Body of pancreas (tissue), 4 donors: ENCODE measurements at regions of chr18 and their contacts with region 1.

Region 1: GRCh38 chr18:63320046-63320689 is 599 bp upstream of the BCL2 start:
- DNase-seq: peak; percentile 75 to 91 (median 79)
- ATAC-seq: peak; percentile 82
- H3K4me3 ChIP-seq: no peak overlapping the region
- H3K27ac ChIP-seq: peak overlapping the region; percentile 64 to 89 (median 84)
- H3K4me1 ChIP-seq: peaks cover 34% of the 10 kb centered on the region
- H3K27me3 ChIP-seq: no peaks in the 10 kb centered on the region
- CTCF ChIP-seq: peak in 3 of 7 experiments; percentile 18 to 64 (median 43)
- POLR2A ChIP-seq: peak in 2 of 3 donors; percentile 42 to 50

Region 2: GRCh38 chr18:63022429-63023022 is 297.6 kb before region 1 on chr18:
- intact Hi-C with region 1: loop called (anchors 5 kb)
- DNase-seq: no peak
- ATAC-seq: no peak
- H3K4me3 ChIP-seq: no peak overlapping the region
- H3K27ac ChIP-seq: no peak overlapping the region
- H3K4me1 ChIP-seq: no peaks in the 10 kb centered on the region
- H3K27me3 ChIP-seq: no peaks in the 10 kb centered on the region
- CTCF ChIP-seq: peak in 5 of 7 experiments; percentile 14 to 22 (median 17)
- POLR2A ChIP-seq: no peak

Region 3: GRCh38 chr18:63249771-63250170 is 70.4 kb before region 1 on chr18:
- intact Hi-C with region 1: no loop called
- DNase-seq: peak in 1 of 4 donors; percentile 46
- ATAC-seq: no peak
- H3K4me3 ChIP-seq: no peak overlapping the region
- H3K27ac ChIP-seq: no peak overlapping the region
- H3K4me1 ChIP-seq: no peaks in the 10 kb centered on the region
- H3K27me3 ChIP-seq: no peaks in the 10 kb centered on the region
- CTCF ChIP-seq: no peak
- POLR2A ChIP-seq: no peak

Region 4: GRCh38 chr18:63741769-63742168 is 421.6 kb after region 1 on chr18:
- intact Hi-C with region 1: no loop called
- DNase-seq: no peak
- ATAC-seq: no peak
- H3K4me3 ChIP-seq: no peak overlapping the region
- H3K27ac ChIP-seq: no peak overlapping the region
- H3K4me1 ChIP-seq: no peaks in the 10 kb centered on the region
- H3K27me3 ChIP-seq: no peaks in the 10 kb centered on the region
- CTCF ChIP-seq: peak in 1 of 7 experiments; percentile 9
- POLR2A ChIP-seq: no peak